ENCODE measurements at regions of chr12 and their contacts with region 1.

Region 1: GRCh38 chr12:133026996-133027395 is 10.3 kb upstream of the ZNF84 start:
- DNase-seq: no peak
- H3K4me3 ChIP-seq: no peak overlapping the region
- H3K27ac ChIP-seq: no peak overlapping the region
- H3K27me3 ChIP-seq: no peaks in the 10 kb centered on the region
- CTCF ChIP-seq: no peak

Region 2: GRCh38 chr12:132998741-132999140 is 28.3 kb before region 1 on chr12:
- intact Hi-C with region 1: loop called in 1 of 2 experiments (anchors 2 kb)
- DNase-seq: no peak
- H3K4me3 ChIP-seq: no peak overlapping the region
- H3K27ac ChIP-seq: no peak overlapping the region
- H3K27me3 ChIP-seq: no peaks in the 10 kb centered on the region
- CTCF ChIP-seq: no peak